ENCODE measurements at regions of chr6 and their contacts with region 1.

Region 1: DNA sequence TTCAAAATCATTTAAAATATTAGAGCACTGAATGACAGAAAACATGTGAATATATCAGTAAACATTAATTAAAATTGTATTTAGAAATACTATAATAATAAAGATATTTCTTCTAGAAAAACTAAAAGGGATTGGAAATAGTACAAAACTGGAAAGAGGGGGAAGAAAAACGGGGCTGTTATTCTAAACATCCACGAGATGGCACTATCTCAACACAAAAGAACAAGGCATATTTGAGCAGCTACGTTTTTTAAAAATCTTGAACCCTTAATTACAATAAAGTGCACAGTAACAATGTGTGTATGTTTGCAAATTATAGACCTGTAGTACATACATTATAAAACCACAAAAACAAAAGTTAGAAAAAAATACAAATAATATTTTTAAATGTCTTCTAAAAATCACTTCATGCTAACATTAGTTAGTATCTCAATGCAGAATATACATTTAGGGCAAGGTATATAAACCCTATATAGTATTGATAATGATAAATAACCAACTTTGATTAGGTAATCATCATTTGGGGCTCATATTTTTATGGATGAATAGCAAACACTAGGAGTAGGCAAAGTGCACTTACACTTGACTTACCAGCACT is 42.5 kb upstream of the PNISR start:
- DNase-seq: no peak
- ATAC-seq: no peak
- H3K4me3 ChIP-seq: no peak overlapping the region
- H3K27ac ChIP-seq: no peak overlapping the region
- H3K4me1 ChIP-seq: no peaks in the 10 kb centered on the region
- H3K27me3 ChIP-seq: no peaks in the 10 kb centered on the region
- CTCF ChIP-seq: peak; percentile 73; the same call in 1 of the 2 replicates

Region 2: GRCh38 chr6:99425647-99426453 is 41.8 kb before region 1 on chr6:
- CTCF ChIA-PET with region 1: no interaction called
- POLR2A ChIA-PET with region 1: no interaction called
- in situ Hi-C with region 1: no loop called
- intact Hi-C with region 1: no loop called
- DNase-seq: peak; percentile 93
- ATAC-seq: peak; percentile 87
- H3K4me3 ChIP-seq: peak overlapping the region; percentile 95 to 99
- H3K27ac ChIP-seq: peak overlapping the region; percentile 99
- H3K4me1 ChIP-seq: peaks cover 25% of the 10 kb centered on the region
- H3K27me3 ChIP-seq: no peaks in the 10 kb centered on the region
- CTCF ChIP-seq: peak; percentile 78

Region 3: GRCh38 chr6:99568103-99568933 is 100.7 kb after region 1 on chr6 and contains the start of gene CCNC:
- CTCF ChIA-PET with region 1: no interaction called
- POLR2A ChIA-PET with region 1: interaction called, 14 read pairs
- in situ Hi-C with region 1: no loop called
- intact Hi-C with region 1: no loop called
- DNase-seq: peak; percentile 84
- ATAC-seq: peak; percentile 99
- H3K4me3 ChIP-seq: peak within 1 kb of the TSS; percentile 84 to 99
- H3K27ac ChIP-seq: peak within 1 kb of the TSS; percentile 95
- H3K4me1 ChIP-seq: peaks cover 7% of the 10 kb centered on the region; the same call in 1 of the 2 replicates
- H3K27me3 ChIP-seq: no peaks in the 10 kb centered on the region
- CTCF ChIP-seq: no peak
- total RNA-seq, gene CCNC: 43.4 TPM

Region 4: GRCh38 chr6:99746261-99746895 is 278.8 kb after region 1 on chr6:
- CTCF ChIA-PET with region 1: interaction called, 3 read pairs
- POLR2A ChIA-PET with region 1: no interaction called
- in situ Hi-C with region 1: no loop called
- intact Hi-C with region 1: loop called (anchors 1 kb)
- DNase-seq: peak; percentile 61
- ATAC-seq: peak; percentile 87
- H3K4me3 ChIP-seq: no peak overlapping the region
- H3K27ac ChIP-seq: no peak overlapping the region
- H3K4me1 ChIP-seq: no peaks in the 10 kb centered on the region
- H3K27me3 ChIP-seq: peaks cover 9% of the 10 kb centered on the region
- CTCF ChIP-seq: peak; percentile 85

Region 5: GRCh38 chr6:99822741-99823512 is 355.3 kb after region 1 on chr6:
- CTCF ChIA-PET with region 1: no interaction called
- POLR2A ChIA-PET with region 1: no interaction called
- in situ Hi-C with region 1: no loop called
- intact Hi-C with region 1: loop called (anchors 5 kb)
- DNase-seq: peak; percentile 12
- ATAC-seq: peak; percentile 90
- H3K4me3 ChIP-seq: no peak overlapping the region
- H3K27ac ChIP-seq: no peak overlapping the region
- H3K4me1 ChIP-seq: no peaks in the 10 kb centered on the region
- H3K27me3 ChIP-seq: peaks cover 15% of the 10 kb centered on the region
- CTCF ChIP-seq: peak; percentile 74